ENCODE measurements at regions of chr2 and their contacts with region 1.

Region 1: GRCh38 chr2:74178201-74179062 is at the start of gene MOB1A:
- DNase-seq: peak; percentile 99
- ATAC-seq: peak; percentile 90 to 97 (median 92)
- H3K4me3 ChIP-seq: peak within 1 kb of the TSS; percentile 85
- H3K4me3 Mint-ChIP-seq: peak within 1 kb of the TSS; percentile 89
- H3K27ac ChIP-seq: peak within 1 kb of the TSS; percentile 94
- H3K27ac Mint-ChIP-seq: peak within 1 kb of the TSS; percentile 91 to 93
- H3K4me1 ChIP-seq: peaks cover 39% of the 10 kb centered on the region
- H3K4me1 Mint-ChIP-seq: peaks cover 36 to 41% of the 10 kb centered on the region in 2 donors
- H3K27me3 ChIP-seq: no peaks in the 10 kb centered on the region
- H3K27me3 Mint-ChIP-seq: no peaks in the 10 kb centered on the region
- CTCF ChIP-seq: no peak
- total RNA-seq, gene MOB1A: 211 to 239 (median 222) TPM

Region 2: DNA sequence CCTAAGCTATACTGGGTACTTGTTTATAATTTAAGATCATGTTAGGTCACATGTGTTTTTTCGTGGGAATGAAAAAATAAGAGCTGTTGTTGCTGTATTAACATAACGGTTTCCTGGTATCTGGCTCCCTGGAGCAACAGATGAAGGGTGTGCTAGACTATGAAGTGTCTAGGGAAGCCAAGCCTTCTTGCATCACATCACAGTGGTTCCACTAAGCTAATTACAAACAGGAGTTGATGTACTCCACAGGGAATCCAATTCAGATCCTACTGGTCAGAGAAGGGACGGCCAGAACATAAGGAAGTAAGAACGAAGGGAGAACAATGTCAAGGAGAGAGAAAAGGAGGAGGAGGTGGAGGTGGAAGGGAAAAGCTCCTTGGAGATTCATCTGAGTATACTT is 1837.8 kb before region 1 on chr2:
- intact Hi-C with region 1: no loop called
- DNase-seq: no peak
- ATAC-seq: no peak
- H3K4me3 ChIP-seq: no peak overlapping the region
- H3K4me3 Mint-ChIP-seq: no peak overlapping the region
- H3K27ac ChIP-seq: no peak overlapping the region
- H3K27ac Mint-ChIP-seq: no peak overlapping the region
- H3K4me1 ChIP-seq: no peaks in the 10 kb centered on the region
- H3K4me1 Mint-ChIP-seq: no peaks in the 10 kb centered on the region
- H3K27me3 ChIP-seq: no peaks in the 10 kb centered on the region
- H3K27me3 Mint-ChIP-seq: no peaks in the 10 kb centered on the region
- CTCF ChIP-seq: no peak

Region 3: GRCh38 chr2:74020702-74021406 is 157.6 kb before region 1 on chr2:
- intact Hi-C with region 1: no loop called
- DNase-seq: no peak
- ATAC-seq: no peak
- H3K4me3 ChIP-seq: no peak overlapping the region
- H3K4me3 Mint-ChIP-seq: no peak overlapping the region
- H3K27ac ChIP-seq: no peak overlapping the region
- H3K27ac Mint-ChIP-seq: peak overlapping the region in 1 of 2 donors; percentile 57
- H3K4me1 ChIP-seq: peaks cover 47% of the 10 kb centered on the region
- H3K4me1 Mint-ChIP-seq: peaks cover 45 to 54% of the 10 kb centered on the region in 2 donors
- H3K27me3 ChIP-seq: no peaks in the 10 kb centered on the region
- H3K27me3 Mint-ChIP-seq: no peaks in the 10 kb centered on the region
- CTCF ChIP-seq: no peak

Region 4: DNA sequence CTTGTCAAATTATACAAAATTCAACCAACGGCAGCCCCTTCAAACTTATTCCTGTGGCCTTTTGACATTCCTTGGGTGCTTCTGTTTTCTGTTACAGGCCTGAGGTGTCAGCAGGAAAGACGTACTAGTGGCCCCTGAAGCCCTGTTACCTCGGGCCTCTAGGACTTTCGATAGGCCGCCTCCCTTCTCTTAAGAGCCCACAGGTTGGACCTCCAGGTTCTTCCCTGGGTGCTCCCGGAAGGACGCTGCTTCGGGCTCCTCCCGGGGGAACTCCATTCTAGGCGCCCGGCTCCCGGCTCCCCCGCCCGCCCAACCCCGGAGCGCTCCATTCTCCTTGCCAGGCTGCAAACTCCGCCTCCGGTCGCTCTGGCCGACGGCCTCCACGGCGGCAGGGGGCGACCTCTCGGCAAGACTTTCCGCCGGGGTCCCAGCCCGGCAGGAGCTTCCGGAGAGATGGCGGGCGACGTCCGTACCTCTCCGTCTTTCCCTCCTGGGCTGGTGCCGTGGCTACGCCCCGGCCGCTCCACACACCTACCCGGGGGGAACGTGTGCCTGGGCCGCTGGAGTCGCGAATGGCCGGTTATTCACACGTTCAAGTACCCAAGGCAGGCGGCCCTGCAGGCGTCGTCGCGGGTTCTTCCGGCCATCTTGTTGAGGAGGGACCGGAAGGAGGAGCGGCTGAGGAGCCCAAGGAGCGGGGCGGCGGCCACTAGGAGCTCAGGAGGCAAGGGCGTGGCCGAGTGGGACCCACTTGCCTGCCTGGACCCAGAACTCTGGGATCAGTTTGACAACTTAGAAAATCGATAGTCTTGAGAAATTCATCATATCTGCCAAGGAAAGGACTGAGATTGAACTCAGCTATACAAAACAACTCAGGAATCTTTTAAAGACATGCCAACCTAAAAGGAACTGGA is 58.3 kb before region 1 on chr2:
- intact Hi-C with region 1: loop called (anchors 10 kb)
- DNase-seq: peak; percentile 85 to 91
- ATAC-seq: peak; percentile 96 to 98 (median 97)
- H3K4me3 ChIP-seq: peak overlapping the region; percentile 75
- H3K4me3 Mint-ChIP-seq: peak overlapping the region; percentile 85
- H3K27ac ChIP-seq: peak overlapping the region; percentile 87
- H3K27ac Mint-ChIP-seq: peak overlapping the region; percentile 76 to 91
- H3K4me1 ChIP-seq: peaks cover 6% of the 10 kb centered on the region
- H3K4me1 Mint-ChIP-seq: peaks cover 4 to 5% of the 10 kb centered on the region in 2 donors
- H3K27me3 ChIP-seq: no peaks in the 10 kb centered on the region
- H3K27me3 Mint-ChIP-seq: peaks cover under 1 to 2% of the 10 kb centered on the region in 2 donors
- CTCF ChIP-seq: peak; percentile 76

Region 5: GRCh38 chr2:74198461-74199274 is 20.2 kb after region 1 on chr2 and contains the start of gene MTHFD2:
- intact Hi-C with region 1: loop called (anchors 1 kb)
- DNase-seq: peak; percentile 84 to 93
- ATAC-seq: peak; percentile 82 to 95 (median 88)
- H3K4me3 ChIP-seq: peak within 1 kb of the TSS; percentile 71
- H3K4me3 Mint-ChIP-seq: peak within 1 kb of the TSS; percentile 99
- H3K27ac ChIP-seq: peak within 1 kb of the TSS; percentile 84
- H3K27ac Mint-ChIP-seq: peak within 1 kb of the TSS; percentile 98 to 99
- H3K4me1 ChIP-seq: peaks cover 15% of the 10 kb centered on the region
- H3K4me1 Mint-ChIP-seq: peaks cover 30% of the 10 kb centered on the region in 2 donors
- H3K27me3 ChIP-seq: no peaks in the 10 kb centered on the region
- H3K27me3 Mint-ChIP-seq: no peaks in the 10 kb centered on the region
- CTCF ChIP-seq: peak; percentile 85
- total RNA-seq, gene MTHFD2: 28.7 to 41.1 (median 40.5) TPM

Measured in natural killer cell (primary cell).